ENCODE measurements at regions of chr6 and their contacts with region 1.

Region 1: GRCh38 chr6:35731736-35732532 is 4.9 kb upstream of the ARMC12 start:
- DNase-seq: peak; percentile 95
- ATAC-seq: peak; percentile 64
- H3K4me3 ChIP-seq: peak overlapping the region; percentile 39 to 99 (median 92)
- H3K4me3 Mint-ChIP-seq: peak overlapping the region; percentile 94
- H3K27ac ChIP-seq: peak overlapping the region; percentile 94 to 99
- H3K27ac Mint-ChIP-seq: peak overlapping the region; percentile 96
- H3K4me1 ChIP-seq: peaks cover 51 to 61% of the 10 kb centered on the region in 2 donors
- H3K4me1 Mint-ChIP-seq: peaks cover 60% of the 10 kb centered on the region
- H3K27me3 ChIP-seq: peaks cover 0 to 1% (median 0%) of the 10 kb centered on the region in 4 experiments
- H3K27me3 Mint-ChIP-seq: peaks cover under 1% of the 10 kb centered on the region
- CTCF ChIP-seq: peak; percentile 11

Region 2: DNA sequence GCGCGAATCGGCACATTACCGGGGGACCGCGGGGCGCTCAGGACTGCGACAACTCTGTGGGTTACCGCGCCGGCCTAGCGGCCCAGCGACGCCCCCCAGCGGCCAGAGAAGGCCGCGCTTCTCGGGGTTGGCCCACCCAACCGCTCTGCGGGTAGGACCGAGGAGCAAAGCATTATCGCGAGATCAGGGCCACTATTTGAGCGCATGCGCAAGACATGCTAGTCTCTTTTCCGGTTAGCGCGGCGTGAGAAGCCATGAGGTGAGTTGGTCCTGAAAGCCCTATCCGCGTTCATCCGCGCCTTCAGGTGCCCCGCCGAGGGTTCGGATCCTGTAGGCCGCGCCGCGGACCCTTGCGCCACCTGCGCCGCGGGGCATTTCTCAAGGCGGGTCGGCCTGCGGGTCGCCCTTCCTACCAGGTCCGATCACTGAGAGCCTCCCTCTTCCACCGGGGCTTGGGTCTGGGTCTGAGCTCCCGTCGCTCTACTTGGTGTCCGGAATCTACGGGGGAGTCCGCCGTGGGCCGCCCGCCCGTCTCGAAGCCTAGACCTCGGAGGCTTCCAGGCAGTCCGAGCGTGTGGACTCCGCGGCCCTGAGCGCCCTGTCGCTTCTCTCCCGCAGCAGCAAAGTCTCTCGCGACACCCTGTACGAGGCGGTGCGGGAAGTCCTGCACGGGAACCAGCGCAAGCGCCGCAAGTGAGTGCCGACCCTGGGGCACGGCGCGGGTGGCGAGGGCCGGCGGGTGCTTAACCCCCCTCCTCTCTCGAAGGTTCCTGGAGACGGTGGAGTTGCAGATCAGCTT is 263.6 kb before region 1 on chr6 and contains the start of gene RPL10A:
- CTCF ChIA-PET with region 1: interaction called, 3 read pairs
- POLR2A ChIA-PET with region 1: no interaction called
- intact Hi-C with region 1: loop called (anchors 5 kb)
- DNase-seq: peak; percentile 98
- ATAC-seq: peak; percentile 91
- H3K4me3 ChIP-seq: peak within 1 kb of the TSS; percentile 51 to 95 (median 87)
- H3K4me3 Mint-ChIP-seq: peak within 1 kb of the TSS; percentile 99
- H3K27ac ChIP-seq: peak within 1 kb of the TSS; percentile 91 to 92
- H3K27ac Mint-ChIP-seq: peak within 1 kb of the TSS; percentile 99
- H3K4me1 ChIP-seq: peaks cover 19 to 34% of the 10 kb centered on the region in 2 donors
- H3K4me1 Mint-ChIP-seq: peaks cover 42% of the 10 kb centered on the region
- H3K27me3 ChIP-seq: no peaks in the 10 kb centered on the region
- H3K27me3 Mint-ChIP-seq: no peaks in the 10 kb centered on the region
- CTCF ChIP-seq: peak; percentile 91
- total RNA-seq, gene RPL10A: 1,621 and 1,687 TPM in 2 replicates

Region 3: DNA sequence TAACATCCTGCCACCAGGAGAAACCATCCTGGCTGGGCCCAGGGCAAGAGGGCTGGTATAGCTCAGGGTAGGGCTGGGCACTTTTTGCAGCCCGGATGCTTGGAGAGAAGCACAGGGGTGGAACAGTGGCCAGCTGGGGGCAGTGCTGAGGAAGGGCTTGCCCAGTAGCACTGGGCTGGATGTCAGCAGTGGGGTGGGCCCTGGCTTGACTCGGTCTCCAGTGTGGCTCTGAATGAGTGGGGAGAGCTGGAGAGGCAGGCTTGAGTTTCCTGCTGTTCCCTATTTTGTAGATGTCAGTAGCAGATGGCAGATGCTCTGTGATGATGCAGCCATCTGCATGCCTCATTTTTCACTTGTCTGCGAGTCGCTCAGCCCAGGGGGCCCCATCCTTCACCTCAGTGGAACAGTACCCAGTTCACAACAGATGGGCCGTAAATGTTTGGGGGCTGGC is 162.9 kb before region 1 on chr6:
- CTCF ChIA-PET with region 1: interaction called, 15 read pairs
- POLR2A ChIA-PET with region 1: no interaction called
- intact Hi-C with region 1: no loop called
- DNase-seq: no peak
- ATAC-seq: no peak
- H3K4me3 ChIP-seq: no peak overlapping the region
- H3K4me3 Mint-ChIP-seq: no peak overlapping the region
- H3K27ac ChIP-seq: no peak overlapping the region
- H3K27ac Mint-ChIP-seq: no peak overlapping the region
- H3K4me1 ChIP-seq: no peaks in the 10 kb centered on the region
- H3K4me1 Mint-ChIP-seq: no peaks in the 10 kb centered on the region
- H3K27me3 ChIP-seq: peaks cover 0 to 5% (median 0%) of the 10 kb centered on the region in 4 experiments
- H3K27me3 Mint-ChIP-seq: peaks cover 24% of the 10 kb centered on the region
- CTCF ChIP-seq: no peak

Region 4: DNA sequence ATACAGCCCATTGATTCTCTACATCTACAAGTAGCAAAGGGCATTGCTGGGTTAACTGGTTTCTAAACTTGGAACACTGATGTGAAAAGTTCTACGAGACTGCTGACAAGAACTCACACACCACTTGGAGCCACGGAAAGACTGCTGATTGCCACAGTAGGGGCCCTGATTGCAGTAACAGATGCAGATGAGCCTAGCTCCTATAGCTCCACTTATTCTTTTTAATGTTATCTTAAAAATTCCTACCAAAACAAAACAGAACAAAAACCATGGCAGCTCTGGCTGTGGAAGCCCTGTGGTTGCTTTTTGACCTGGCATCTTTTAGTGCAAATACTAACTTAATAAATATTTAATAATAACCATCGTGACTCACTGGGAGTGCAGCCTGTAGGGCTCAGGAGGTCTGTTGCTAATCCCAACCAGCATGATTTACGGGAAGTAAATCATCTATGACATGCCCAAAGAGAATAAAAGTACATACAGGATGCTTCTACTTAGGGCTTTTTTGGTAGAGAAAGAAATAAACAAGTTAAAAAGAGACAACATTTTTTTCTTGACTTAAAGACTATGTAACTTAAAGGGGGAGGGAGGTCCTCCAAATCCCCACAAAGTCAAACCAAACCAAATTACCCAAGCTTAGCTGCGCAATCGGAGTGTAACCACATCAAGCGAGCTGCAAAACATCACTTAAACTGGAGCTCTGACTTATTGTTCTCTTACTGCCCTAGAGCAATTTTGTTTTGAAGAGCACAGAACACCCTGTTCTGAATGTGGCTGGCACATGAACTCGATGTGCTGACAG is 130.4 kb before region 1 on chr6:
- CTCF ChIA-PET with region 1: interaction called, 64 read pairs
- POLR2A ChIA-PET with region 1: interaction called, 4 read pairs
- intact Hi-C with region 1: no loop called
- DNase-seq: peak; percentile 18
- ATAC-seq: peak; percentile 24
- H3K4me3 ChIP-seq: peak overlapping the region in 4 of 5 experiments; percentile 5 to 34 (median 12)
- H3K4me3 Mint-ChIP-seq: peak overlapping the region; percentile 51
- H3K27ac ChIP-seq: peak overlapping the region; percentile 24
- H3K27ac Mint-ChIP-seq: peak overlapping the region; percentile 80
- H3K4me1 ChIP-seq: peaks cover 17 to 27% of the 10 kb centered on the region in 2 donors
- H3K4me1 Mint-ChIP-seq: peaks cover 38% of the 10 kb centered on the region
- H3K27me3 ChIP-seq: no peaks in the 10 kb centered on the region
- H3K27me3 Mint-ChIP-seq: no peaks in the 10 kb centered on the region
- CTCF ChIP-seq: no peak

Region 5: DNA sequence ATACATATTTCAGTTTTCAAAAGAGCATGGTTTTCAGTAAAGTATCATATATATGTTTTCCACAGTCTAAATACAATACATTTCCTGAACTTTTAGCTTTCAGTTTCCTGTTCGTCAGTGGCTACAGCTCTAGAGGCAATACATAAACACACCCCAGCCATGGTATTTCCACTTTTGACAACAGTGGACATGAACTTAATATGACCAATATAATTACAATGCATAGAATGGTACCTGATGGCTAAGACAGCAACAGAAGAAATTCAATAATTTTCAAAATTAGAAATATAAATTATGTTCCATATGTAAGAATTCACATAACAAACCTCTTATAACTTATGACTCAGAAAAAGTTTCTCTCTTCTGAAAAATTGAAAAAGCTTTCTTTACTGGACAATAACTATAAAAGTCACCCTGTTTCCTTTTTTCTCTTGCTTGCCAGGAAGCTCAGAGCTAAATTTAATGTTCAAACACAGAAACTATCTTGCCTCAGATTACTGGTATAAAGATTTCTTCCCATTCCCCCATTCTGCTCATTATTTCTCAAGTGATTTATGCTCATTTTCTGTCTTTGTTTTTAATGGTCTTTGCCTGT is 62.4 kb before region 1 on chr6:
- CTCF ChIA-PET with region 1: interaction called, 18 read pairs
- POLR2A ChIA-PET with region 1: no interaction called
- intact Hi-C with region 1: no loop called
- DNase-seq: peak; percentile 41
- ATAC-seq: no peak
- H3K4me3 ChIP-seq: peak overlapping the region in 4 of 5 experiments; percentile 5 to 51 (median 22)
- H3K4me3 Mint-ChIP-seq: peak overlapping the region; percentile 80
- H3K27ac ChIP-seq: peak overlapping the region; percentile 9 to 66
- H3K27ac Mint-ChIP-seq: peak overlapping the region; percentile 7
- H3K4me1 ChIP-seq: peaks cover 12 to 30% of the 10 kb centered on the region in 2 donors
- H3K4me1 Mint-ChIP-seq: peaks cover 29% of the 10 kb centered on the region
- H3K27me3 ChIP-seq: no peaks in the 10 kb centered on the region
- H3K27me3 Mint-ChIP-seq: no peaks in the 10 kb centered on the region
- CTCF ChIP-seq: no peak

Measured in B cell (primary cell).